ENCODE measurements at regions of chr17 and their contacts with region 1.

Region 1: GRCh38 chr17:81148986-81149533 is 16.2 kb upstream of the PVALEF start:
- DNase-seq: peak in 1 of 5 donors; percentile 44
- ATAC-seq: no peak
- H3K4me3 ChIP-seq: no peak overlapping the region
- H3K27ac ChIP-seq: no peak overlapping the region
- H3K4me1 ChIP-seq: peaks cover 0 to 36% (median 0%) of the 10 kb centered on the region in 12 donors
- H3K27me3 ChIP-seq: no peaks in the 10 kb centered on the region
- CTCF ChIP-seq: no peak
- POLR2A ChIP-seq: no peak

Region 2: DNA sequence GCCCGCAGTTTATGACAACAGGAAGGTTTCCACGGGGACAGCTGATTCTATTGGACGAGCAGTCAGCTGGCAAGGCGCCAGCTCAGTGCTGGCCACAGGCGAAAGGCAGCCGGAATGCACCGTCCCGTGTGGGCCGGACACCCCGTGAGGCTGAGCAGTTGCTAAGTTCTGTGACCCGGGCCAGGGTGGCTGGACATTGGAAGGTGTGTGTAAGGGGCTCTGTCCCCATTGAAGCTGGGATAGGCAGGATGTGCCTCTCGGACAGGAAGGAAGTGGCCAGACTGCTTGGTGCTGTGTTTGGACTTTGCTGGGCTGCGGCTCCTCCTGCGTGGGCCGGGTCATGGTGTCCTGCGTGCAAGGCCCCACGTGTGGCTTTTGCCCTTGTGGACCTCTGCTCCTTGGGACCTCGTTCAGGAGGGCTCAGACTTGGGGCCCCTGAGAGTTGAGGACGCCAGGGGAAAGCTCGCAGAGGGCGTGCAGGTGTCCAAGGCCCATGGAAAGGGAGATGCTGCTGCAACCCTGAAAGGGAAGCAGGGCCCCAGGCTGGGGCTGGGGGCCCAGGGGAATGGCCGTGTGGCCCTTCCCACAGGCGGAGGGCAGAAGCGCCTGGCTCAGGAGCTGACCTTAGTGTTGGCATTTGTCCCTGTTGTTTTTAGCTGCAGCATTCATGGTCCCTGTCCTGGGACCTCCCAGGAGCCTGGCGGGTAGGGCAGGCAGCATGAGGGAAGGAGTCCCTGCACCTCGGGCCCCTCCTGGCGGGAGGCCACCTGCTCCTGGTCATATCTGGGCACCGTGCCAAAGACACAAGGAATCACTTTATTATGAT is 104.1 kb before region 1 on chr17:
- intact Hi-C with region 1: no loop called
- DNase-seq: peak; percentile 88 to 97 (median 92)
- ATAC-seq: peak; percentile 62 to 87 (median 81)
- H3K4me3 ChIP-seq: peak overlapping the region in 8 of 12 donors; percentile 8 to 32 (median 18)
- H3K27ac ChIP-seq: peak overlapping the region; percentile 58 to 86 (median 78)
- H3K4me1 ChIP-seq: peaks cover 14 to 85% (median 60%) of the 10 kb centered on the region in 12 donors
- H3K27me3 ChIP-seq: no peaks in the 10 kb centered on the region
- CTCF ChIP-seq: no peak
- POLR2A ChIP-seq: no peak

Region 3: GRCh38 chr17:81189670-81190530 is 40.8 kb after region 1 on chr17:
- intact Hi-C with region 1: loop called in 1 of 10 experiments (anchors 5 kb)
- DNase-seq: peak in 1 of 5 donors; percentile 6
- ATAC-seq: peak in 1 of 4 donors; percentile 45
- H3K4me3 ChIP-seq: no peak overlapping the region
- H3K27ac ChIP-seq: no peak overlapping the region
- H3K4me1 ChIP-seq: peaks cover 0 to 14% (median under 1%) of the 10 kb centered on the region in 12 donors
- H3K27me3 ChIP-seq: no peaks in the 10 kb centered on the region
- CTCF ChIP-seq: peak in 2 of 12 donors; percentile 9 to 13
- POLR2A ChIP-seq: no peak

Region 4: GRCh38 chr17:81393684-81394376 is 244.8 kb after region 1 on chr17:
- intact Hi-C with region 1: no loop called
- DNase-seq: peak; percentile 100
- ATAC-seq: peak; percentile 65 to 79 (median 70)
- H3K4me3 ChIP-seq: peak overlapping the region; percentile 75 to 95 (median 85)
- H3K27ac ChIP-seq: peak overlapping the region; percentile 95 to 100 (median 98)
- H3K4me1 ChIP-seq: peaks cover 8 to 77% (median 38%) of the 10 kb centered on the region in 12 donors
- H3K27me3 ChIP-seq: peaks cover 0 to 10% (median 0%) of the 10 kb centered on the region in 9 donors
- CTCF ChIP-seq: peak in 3 of 12 donors; percentile 19 to 41 (median 27)
- POLR2A ChIP-seq: peak in 1 of 2 donors; percentile 88

Region 5: DNA sequence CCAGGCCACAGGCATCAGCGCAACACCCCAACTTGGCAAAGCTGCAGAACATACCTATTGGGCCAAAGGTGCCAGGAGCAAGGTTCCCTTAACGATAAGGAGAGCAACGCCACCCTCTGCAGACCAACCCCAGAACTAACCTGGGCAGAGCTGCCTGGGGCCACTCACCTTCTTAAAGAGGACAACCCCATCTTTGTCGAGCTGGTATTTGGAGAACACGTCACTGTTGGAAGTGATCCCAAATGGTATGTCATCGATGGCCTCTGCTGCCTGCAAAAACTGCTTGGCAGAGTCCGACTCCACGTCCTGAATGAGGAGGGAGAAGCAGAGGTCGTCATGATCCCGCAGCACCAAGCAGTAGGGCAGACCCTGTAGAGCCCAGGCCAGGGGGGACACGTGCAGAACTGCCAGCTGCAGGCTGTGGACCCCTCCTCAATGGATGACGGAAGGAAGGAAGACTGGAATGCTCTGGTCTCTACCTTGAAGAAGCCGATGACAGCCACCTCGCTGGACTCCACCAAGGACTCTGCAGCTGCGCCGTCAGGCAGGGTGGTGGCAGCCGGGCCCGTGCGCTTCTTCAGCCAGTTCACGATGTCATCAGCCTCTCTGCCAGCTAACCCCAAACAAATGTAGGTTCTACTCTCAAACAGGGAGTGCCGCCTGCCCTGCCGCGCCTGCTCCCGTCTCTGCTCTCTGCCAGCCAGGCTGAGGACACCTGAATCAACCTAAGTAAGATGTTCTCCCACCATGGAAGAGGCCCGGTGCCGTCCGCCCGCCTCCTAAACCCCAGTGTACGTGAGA is 706.1 kb after region 1 on chr17:
- intact Hi-C with region 1: no loop called
- DNase-seq: no peak
- ATAC-seq: peak; percentile 17 to 58 (median 27)
- H3K4me3 ChIP-seq: no peak overlapping the region
- H3K27ac ChIP-seq: peak overlapping the region in 3 of 12 donors; percentile 2 to 22 (median 13)
- H3K4me1 ChIP-seq: peaks cover 11 to 40% (median 27%) of the 10 kb centered on the region in 12 donors
- H3K27me3 ChIP-seq: no peaks in the 10 kb centered on the region
- CTCF ChIP-seq: no peak
- POLR2A ChIP-seq: no peak